SK-N-SH (cell line): ENCODE measurements at regions of chr12 and their contacts with region 1.

Region 1: DNA sequence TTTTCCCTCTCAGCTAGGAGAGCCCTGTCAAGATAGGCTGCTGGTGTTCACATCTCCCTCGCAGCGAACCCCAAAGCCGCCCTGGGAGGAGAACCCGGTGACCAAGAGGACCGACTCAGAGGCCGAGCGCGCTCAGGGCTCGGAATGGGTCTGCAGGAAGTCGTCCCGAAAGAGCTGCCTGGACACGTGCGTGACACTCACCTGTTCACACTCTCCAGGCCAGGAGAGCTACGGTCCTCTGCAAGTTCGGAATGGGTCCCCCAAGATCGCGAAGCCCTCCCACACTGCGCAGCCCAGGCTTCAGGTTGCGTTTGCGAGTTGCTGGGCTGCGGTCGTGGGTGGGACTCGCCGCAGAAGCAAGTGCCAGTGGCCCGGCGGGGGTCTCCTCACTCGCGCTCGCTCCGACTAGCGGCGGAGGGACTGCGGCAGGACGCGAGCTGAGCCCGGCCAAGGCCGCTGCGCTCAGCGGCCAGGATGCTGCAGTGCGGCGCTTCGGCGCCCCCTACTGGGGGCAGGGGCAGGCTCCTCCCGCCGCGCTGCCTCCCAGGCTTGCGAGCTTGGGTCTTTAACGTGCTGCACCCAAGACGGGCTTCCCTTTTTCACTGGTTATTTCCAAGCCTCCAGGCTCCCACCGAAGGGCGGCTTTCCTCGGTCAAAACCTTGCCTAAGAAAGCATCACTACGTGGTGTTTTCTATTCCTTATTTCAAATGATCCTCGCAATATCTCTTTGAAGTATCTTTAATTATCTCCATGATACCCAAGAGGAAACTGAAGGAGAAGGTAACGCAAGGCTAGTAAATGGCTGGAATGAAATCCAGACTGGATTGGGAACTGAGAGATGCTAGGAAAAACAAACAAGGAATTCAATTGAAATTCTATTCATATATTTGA is at the start of gene RERG:
- DNase-seq: peak; percentile 88
- H3K4me3 ChIP-seq: peak within 1 kb of the TSS; percentile 45 to 58
- H3K27ac ChIP-seq: no peak within 1 kb of the TSS
- H3K4me1 ChIP-seq: peaks cover 0 to 4% of the 10 kb centered on the region in 2 experiments; a peak in 2 of 4 replicates
- H3K27me3 ChIP-seq: no peaks in the 10 kb centered on the region; the same call in 1 of the 2 replicates
- CTCF ChIP-seq: peak; percentile 90
- EP300 ChIP-seq: no peak
- RAD21 ChIP-seq: peak; percentile 86
- polyA plus RNA-seq, gene RERG: 0.49 and 0.84 TPM in 2 replicates

Region 2: GRCh38 chr12:15142711-15143110 is 78.5 kb before region 1 on chr12:
- CTCF ChIA-PET with region 1: interaction called, 10 read pairs
- POLR2A ChIA-PET with region 1: no interaction called
- DNase-seq: no peak
- H3K4me3 ChIP-seq: no peak overlapping the region
- H3K27ac ChIP-seq: no peak overlapping the region
- H3K4me1 ChIP-seq: no peaks in the 10 kb centered on the region
- H3K27me3 ChIP-seq: no peaks in the 10 kb centered on the region; the same call in 1 of the 2 replicates
- CTCF ChIP-seq: no peak
- EP300 ChIP-seq: no peak
- RAD21 ChIP-seq: no peak

Region 3: GRCh38 chr12:15165012-15165659 is 56.1 kb before region 1 on chr12:
- CTCF ChIA-PET with region 1: interaction called, 16 read pairs
- POLR2A ChIA-PET with region 1: no interaction called
- DNase-seq: no peak
- H3K4me3 ChIP-seq: no peak overlapping the region
- H3K27ac ChIP-seq: no peak overlapping the region
- H3K4me1 ChIP-seq: no peaks in the 10 kb centered on the region
- H3K27me3 ChIP-seq: no peaks in the 10 kb centered on the region; the same call in 1 of the 2 replicates
- CTCF ChIP-seq: no peak
- EP300 ChIP-seq: no peak
- RAD21 ChIP-seq: no peak

Region 4: DNA sequence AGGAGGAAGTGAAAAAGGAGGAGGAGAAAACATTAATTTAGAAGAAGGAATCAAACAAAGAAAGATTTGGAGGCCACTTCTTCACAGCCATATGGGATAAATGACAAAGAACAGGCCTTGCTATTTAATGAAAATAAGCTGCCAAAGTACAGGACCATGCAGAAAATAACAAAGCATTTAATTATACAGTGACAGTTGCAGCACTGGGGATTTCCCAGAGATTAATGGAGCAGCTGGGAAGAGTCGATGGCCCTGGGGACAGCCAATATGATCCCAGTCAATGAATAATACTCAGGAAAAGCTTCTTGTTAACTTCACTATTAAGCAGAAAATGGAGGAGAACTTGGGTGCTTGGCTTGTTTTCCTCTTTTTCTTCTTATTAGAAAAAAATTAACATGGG is 34.6 kb before region 1 on chr12:
- CTCF ChIA-PET with region 1: interaction called, 29 read pairs
- POLR2A ChIA-PET with region 1: no interaction called
- DNase-seq: peak; percentile 13
- H3K4me3 ChIP-seq: no peak overlapping the region
- H3K27ac ChIP-seq: no peak overlapping the region
- H3K4me1 ChIP-seq: no peaks in the 10 kb centered on the region
- H3K27me3 ChIP-seq: no peaks in the 10 kb centered on the region; the same call in 1 of the 2 replicates
- CTCF ChIP-seq: no peak
- EP300 ChIP-seq: peak in 1 of 2 experiments; percentile 80; a peak in 2 of 4 replicates
- RAD21 ChIP-seq: no peak

Region 5: GRCh38 chr12:15243111-15243885 is 22.1 kb after region 1 on chr12:
- CTCF ChIA-PET with region 1: interaction called, 16 read pairs
- POLR2A ChIA-PET with region 1: no interaction called
- DNase-seq: no peak
- H3K4me3 ChIP-seq: no peak overlapping the region
- H3K27ac ChIP-seq: no peak overlapping the region
- H3K4me1 ChIP-seq: no peaks in the 10 kb centered on the region
- H3K27me3 ChIP-seq: peaks cover 6% of the 10 kb centered on the region; the same call in 1 of the 2 replicates
- CTCF ChIP-seq: no peak
- EP300 ChIP-seq: no peak
- RAD21 ChIP-seq: no peak

Region 6: DNA sequence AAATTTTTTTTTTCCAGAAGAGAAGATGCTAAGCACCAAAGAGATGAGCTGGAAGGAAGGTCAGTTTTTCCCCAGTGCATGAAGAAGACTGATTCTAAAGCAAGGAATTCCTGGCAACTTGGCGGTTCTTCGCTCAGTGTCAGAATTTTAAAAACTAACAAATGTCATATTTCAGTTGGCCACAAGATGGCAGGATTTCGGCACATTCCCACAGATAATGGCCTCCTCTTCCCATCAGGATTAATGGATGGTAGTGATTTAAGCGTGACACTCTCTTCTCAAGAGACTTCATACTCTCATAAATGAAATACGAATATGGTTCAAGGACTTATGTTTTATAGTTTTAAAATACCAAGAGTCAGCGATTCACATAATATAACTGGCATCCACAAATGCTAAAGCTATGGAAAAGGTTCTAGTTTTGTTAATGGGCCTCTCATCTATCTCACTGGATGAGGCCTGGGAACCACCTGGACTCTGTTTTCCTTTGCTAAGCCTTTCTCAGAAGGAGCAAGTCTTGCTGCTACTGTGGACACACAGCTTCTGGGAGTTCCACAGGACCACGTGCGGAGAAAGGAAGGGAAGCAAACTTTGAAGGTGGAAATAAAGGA is 55.0 kb after region 1 on chr12:
- CTCF ChIA-PET with region 1: interaction called, 11 read pairs
- POLR2A ChIA-PET with region 1: no interaction called
- DNase-seq: peak; percentile 46
- H3K4me3 ChIP-seq: peak overlapping the region in 1 of 2 experiments; percentile 4; a peak in 1 of 4 replicates
- H3K27ac ChIP-seq: no peak overlapping the region
- H3K4me1 ChIP-seq: peaks cover 23 to 24% of the 10 kb centered on the region in 2 experiments
- H3K27me3 ChIP-seq: no peaks in the 10 kb centered on the region
- CTCF ChIP-seq: peak; percentile 77
- EP300 ChIP-seq: no peak
- RAD21 ChIP-seq: peak; percentile 88

Region 7: DNA sequence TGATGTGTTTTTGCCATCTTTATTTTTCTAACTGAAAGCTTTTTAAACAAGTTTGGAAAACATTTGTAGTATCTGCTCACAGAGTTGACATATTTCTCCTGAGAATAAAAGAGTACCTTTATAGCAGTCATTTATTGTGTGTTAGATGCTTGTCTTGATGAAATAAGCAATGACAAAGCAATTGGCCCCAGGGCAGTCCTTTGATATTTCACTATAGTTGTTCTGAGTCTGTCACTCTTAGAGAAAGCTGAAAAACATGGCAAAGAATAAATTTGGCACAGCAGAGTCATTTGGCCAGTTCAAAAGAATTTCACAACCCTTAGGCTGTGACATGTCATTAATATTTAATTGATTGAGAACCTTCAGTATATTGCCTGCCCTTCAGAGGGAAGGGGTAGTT is 267.2 kb after region 1 on chr12:
- CTCF ChIA-PET with region 1: no interaction called
- POLR2A ChIA-PET with region 1: no interaction called
- DNase-seq: no peak
- H3K4me3 ChIP-seq: no peak overlapping the region
- H3K27ac ChIP-seq: no peak overlapping the region
- H3K4me1 ChIP-seq: no peaks in the 10 kb centered on the region
- H3K27me3 ChIP-seq: no peaks in the 10 kb centered on the region
- CTCF ChIP-seq: no peak
- EP300 ChIP-seq: no peak
- RAD21 ChIP-seq: no peak